ENCODE measurements at regions of chr11 and their contacts with region 1.

Region 1: DNA sequence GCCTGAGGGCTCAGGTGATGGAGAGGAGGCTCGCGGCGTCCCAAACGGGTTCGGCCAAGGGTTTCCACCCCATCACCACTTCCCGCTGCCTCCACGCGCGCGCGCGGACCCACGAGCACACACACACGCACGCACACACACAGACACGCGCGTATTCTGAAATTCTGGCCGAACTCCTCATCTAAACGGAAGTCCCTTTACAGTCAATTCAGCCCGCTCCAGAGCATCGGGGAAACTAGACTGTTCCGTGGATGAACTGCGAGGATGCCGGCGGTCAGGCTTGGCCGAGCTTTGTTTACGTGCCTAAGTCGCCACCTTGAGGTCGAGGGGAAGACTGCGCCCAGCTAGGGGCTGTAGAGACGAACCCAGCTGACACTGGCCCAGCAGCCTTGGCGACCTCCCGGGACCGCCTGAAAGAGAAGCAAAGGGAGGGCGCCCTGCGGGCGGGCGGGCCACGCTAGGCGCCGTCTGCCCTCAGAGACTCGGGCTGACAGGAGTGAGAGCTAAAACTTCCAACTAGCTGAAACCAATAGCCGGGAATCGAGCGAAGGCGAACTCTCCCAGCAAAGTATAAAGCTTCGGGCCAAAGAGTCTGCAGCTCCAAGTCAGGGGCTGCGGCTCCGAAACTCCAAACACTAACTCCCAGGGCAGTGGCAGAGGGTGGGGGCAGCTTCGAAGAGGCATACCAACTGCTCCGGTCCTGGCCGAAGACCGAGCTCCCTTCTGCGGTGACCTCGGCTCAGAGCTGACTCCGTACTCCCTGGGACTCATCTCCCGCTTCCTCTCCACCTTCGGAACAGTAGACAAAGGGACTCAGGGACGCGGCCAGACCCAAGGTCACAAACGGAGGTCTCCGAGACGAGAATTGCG is 124.7 kb upstream of the C11orf58 start:
- DNase-seq: peak; percentile 68
- H3K4me3 ChIP-seq: peak overlapping the region; percentile 66
- H3K27ac ChIP-seq: no peak overlapping the region
- H3K27me3 ChIP-seq: peaks cover 32% of the 10 kb centered on the region
- CTCF ChIP-seq: peak; percentile 92

Region 2: DNA sequence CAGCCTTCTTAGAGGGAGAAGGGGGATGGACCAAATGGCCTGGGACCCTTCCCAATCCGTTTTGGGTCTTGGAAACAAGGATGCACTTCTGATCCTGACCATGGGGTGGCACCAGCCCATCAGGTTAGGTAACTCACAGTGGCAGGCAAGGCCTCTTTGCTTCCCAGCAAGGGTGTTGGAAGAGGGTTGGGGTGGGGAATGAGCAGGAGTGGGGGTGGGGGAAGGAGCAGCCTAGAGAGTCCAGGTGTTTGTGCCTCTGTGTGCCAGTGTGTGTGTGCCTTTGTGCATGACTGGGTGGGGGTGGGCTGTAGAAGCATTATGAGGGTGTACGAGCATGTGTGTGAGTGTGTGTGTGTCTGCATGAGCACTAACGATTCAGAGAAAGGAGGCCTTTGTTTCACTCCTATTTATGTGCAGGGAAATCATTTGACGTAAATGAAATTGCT is 1285.9 kb before region 1 on chr11:
- CTCF ChIA-PET with region 1: interaction called, 10 read pairs
- POLR2A ChIA-PET with region 1: no interaction called
- DNase-seq: peak; percentile 7
- H3K4me3 ChIP-seq: no peak overlapping the region
- H3K27ac ChIP-seq: no peak overlapping the region
- H3K27me3 ChIP-seq: no peaks in the 10 kb centered on the region
- CTCF ChIP-seq: peak; percentile 67

Region 3: DNA sequence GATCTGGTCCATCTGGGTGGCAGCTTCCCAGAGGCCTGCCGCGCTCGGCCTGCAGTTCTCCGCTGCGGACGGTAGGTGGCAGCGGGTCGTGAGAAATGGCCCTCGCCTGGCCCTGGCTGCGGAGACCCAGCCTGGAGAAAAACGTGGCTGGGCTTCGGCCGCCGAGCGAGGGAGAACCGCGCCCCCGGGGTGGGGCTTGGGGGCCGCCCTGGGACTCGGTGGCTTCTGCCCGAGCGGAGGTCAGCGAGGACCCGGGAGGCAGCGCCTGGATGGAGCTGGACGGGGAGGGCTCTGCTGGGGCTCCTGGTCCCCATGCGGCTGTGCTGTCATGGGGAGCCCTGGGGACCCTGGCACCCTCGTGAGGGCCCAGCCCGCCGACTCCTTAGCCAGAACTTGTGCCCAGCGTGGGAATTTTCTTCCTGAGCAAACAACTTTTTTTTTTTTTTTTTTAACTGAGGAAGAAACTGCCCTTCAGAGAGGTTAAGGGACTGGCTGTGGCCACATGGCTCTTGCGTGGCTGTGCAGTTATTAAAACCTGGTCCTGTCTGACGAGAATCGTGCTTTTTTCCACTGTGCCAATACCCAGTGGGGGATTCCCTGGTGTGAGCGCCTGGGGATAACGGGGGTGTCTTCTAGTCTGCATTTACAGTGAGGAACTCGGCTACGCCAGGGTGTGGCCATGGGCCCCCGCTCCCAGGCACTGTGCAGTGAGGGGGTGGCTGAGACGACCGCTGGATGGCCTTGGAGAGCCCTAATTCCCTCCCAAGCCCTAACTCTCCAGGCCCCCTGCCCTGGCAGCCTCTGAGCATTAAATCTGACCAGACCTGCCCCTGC is 963.4 kb before region 1 on chr11:
- CTCF ChIA-PET with region 1: interaction called, 51 read pairs
- POLR2A ChIA-PET with region 1: no interaction called
- DNase-seq: peak; percentile 82
- H3K4me3 ChIP-seq: peak overlapping the region; percentile 59
- H3K27ac ChIP-seq: peak overlapping the region; percentile 31
- H3K27me3 ChIP-seq: no peaks in the 10 kb centered on the region
- CTCF ChIP-seq: peak; percentile 95

Region 4: GRCh38 chr11:15772981-15773380 is 840.8 kb before region 1 on chr11:
- CTCF ChIA-PET with region 1: interaction called, 12 read pairs
- POLR2A ChIA-PET with region 1: no interaction called
- DNase-seq: no peak
- H3K4me3 ChIP-seq: no peak overlapping the region
- H3K27ac ChIP-seq: no peak overlapping the region
- H3K27me3 ChIP-seq: no peaks in the 10 kb centered on the region
- CTCF ChIP-seq: no peak

Region 5: DNA sequence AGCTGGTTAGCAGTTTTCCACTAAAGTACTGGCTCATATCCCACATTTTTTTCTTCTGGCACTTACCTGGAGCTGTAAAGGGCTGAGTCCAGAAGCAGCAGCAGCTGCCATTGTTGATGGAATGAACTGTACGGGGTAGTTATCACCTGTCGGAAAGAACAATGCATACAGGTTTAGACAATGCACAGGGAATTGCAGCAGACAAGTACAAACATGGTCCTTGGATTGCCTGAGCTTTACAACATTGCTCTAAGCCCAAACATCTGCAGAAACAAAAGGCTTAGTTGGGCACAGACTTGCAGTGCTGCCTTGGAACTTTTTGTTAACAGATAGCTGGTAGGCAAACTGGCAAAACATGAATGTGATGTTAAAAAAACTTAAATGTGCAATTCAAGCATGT is 516.2 kb before region 1 on chr11:
- CTCF ChIA-PET with region 1: interaction called, 15 read pairs
- POLR2A ChIA-PET with region 1: no interaction called
- DNase-seq: no peak
- H3K4me3 ChIP-seq: no peak overlapping the region
- H3K27ac ChIP-seq: no peak overlapping the region
- H3K27me3 ChIP-seq: no peaks in the 10 kb centered on the region
- CTCF ChIP-seq: no peak